ENCODE measurements at regions of chr2 and their contacts with region 1.

Region 1: GRCh38 chr2:187842978-187843847 is 289.0 kb upstream of the TFPI start:
- DNase-seq: peak; percentile 32
- ATAC-seq: peak; percentile 87
- H3K4me3 ChIP-seq: no peak overlapping the region
- H3K27ac ChIP-seq: peak overlapping the region; percentile 78
- H3K4me1 ChIP-seq: peaks cover 6% of the 10 kb centered on the region; the same call in 1 of the 2 replicates
- H3K27me3 ChIP-seq: no peaks in the 10 kb centered on the region
- CTCF ChIP-seq: peak; percentile 67; the same call in 1 of the 2 replicates

Region 2: DNA sequence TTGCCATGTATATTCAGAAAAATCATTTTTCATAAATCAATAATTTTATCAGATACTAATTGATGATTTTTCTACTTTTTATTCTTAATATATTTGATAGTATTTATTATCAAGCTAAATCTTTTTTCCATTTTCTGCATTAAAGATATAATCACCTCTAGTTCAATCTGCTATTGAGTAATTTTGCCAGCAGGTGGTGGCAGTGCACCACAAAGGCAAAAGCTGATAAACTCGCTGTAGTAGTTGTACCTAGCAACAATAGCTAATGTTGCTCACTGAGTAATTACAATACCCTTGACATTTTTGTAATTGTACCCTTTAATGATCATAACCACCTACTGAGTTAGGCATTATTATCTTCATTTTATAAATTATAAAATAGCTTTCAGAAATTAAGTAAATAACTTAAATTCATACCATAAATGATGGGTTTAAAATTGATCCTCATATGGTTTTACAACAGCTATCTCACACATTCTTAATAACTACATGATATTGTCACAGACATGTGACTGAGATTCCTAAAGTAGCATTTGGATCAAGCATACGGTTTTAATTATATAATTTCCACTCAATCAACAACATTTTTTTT is 343.2 kb before region 1 on chr2:
- CTCF ChIA-PET with region 1: interaction called, 11 read pairs
- POLR2A ChIA-PET with region 1: no interaction called
- in situ Hi-C with region 1: no loop called
- intact Hi-C with region 1: loop called (anchors 2 kb)
- DNase-seq: peak; percentile 56
- ATAC-seq: peak; percentile 71
- H3K4me3 ChIP-seq: no peak overlapping the region
- H3K27ac ChIP-seq: peak overlapping the region; percentile 97; the same call in 1 of the 2 replicates
- H3K4me1 ChIP-seq: peaks cover 58% of the 10 kb centered on the region
- H3K27me3 ChIP-seq: no peaks in the 10 kb centered on the region
- CTCF ChIP-seq: peak; percentile 79; the same call in 1 of the 2 replicates

Region 3: DNA sequence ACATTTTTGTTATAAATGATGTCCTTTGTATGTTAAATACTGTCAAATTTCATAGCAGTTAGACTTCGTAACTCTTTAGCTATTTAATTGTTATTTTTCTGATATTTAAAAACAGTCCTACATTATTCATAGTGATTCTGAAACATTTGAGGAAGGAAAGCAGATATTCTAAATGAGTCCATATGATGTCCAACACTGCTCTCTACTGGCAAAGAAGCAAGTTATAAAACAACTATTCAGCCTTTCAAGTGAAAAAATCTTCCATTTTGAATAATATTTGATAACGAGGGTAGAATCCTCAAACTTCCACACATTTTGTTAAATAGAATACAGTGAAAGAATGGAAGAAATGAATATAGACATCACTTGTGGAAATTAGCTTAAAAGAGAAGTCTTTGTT is 669.2 kb after region 1 on chr2:
- CTCF ChIA-PET with region 1: no interaction called
- POLR2A ChIA-PET with region 1: no interaction called
- in situ Hi-C with region 1: no loop called
- intact Hi-C with region 1: loop called (anchors 5 kb)
- DNase-seq: no peak
- ATAC-seq: peak; percentile 72; the same call in 1 of the 2 replicates
- H3K4me3 ChIP-seq: no peak overlapping the region
- H3K27ac ChIP-seq: no peak overlapping the region
- H3K4me1 ChIP-seq: peaks cover 21% of the 10 kb centered on the region; the same call in 1 of the 2 replicates
- H3K27me3 ChIP-seq: no peaks in the 10 kb centered on the region
- CTCF ChIP-seq: peak; percentile 57; the same call in 1 of the 2 replicates

Measured in Panc1 (cell line).